Pancreas (tissue), 10 donors: ENCODE measurements at regions of chr12 and their contacts with region 1.

Region 1: DNA sequence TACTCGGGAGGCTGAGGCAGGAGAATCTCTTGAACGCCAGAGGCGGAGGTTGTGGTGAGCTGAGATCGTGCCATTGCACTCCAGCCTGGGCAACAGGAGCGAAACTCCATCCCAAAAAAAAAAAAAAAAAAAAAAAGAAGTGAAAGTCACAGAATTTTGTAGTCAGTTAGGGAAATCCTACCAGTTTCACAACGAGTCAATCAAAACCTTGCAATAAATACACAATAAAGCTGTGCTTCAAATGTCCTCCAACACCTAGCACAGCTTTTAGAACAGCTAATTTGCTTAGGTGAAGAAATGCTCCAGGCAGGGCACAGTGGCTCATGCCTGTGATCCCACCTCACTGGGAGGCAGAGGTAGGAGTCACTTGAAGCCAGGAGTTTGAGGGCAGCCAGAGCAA is 112.8 kb upstream of the ATF7IP start:
- DNase-seq: no peak
- ATAC-seq: no peak
- H3K4me3 ChIP-seq: no peak overlapping the region
- H3K27ac ChIP-seq: no peak overlapping the region
- H3K4me1 ChIP-seq: peaks cover 0 to 8% (median 8%) of the 10 kb centered on the region in 3 donors
- H3K27me3 ChIP-seq: no peaks in the 10 kb centered on the region
- CTCF ChIP-seq: no peak

Region 2: DNA sequence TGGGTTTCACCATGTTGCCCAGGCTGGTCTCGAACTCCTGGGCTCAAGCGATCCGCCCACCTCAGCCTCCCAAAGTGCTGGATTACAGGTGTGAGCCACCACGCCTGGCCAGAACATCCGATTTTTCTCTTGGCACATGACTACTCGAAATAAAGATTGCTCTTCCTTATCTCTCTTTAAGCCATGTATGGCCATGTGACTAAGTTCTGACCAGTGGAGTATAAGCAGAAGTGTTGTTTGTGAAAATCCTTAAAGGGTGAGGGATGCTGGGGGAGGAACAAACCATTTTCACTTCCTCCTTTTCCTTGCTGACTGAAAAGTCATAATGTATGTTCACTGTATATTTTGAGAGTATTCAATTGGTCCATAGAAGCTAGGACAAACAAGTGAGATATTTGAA is 62.1 kb after region 1 on chr12:
- intact Hi-C with region 1: no loop called
- DNase-seq: peak in 1 of 6 donors; percentile 15
- ATAC-seq: peak in 1 of 4 donors; percentile 42
- H3K4me3 ChIP-seq: no peak overlapping the region
- H3K27ac ChIP-seq: no peak overlapping the region
- H3K4me1 ChIP-seq: no peaks in the 10 kb centered on the region
- H3K27me3 ChIP-seq: no peaks in the 10 kb centered on the region
- CTCF ChIP-seq: no peak

Region 3: GRCh38 chr12:14340371-14340770 is 87.7 kb after region 1 on chr12:
- intact Hi-C with region 1: no loop called
- DNase-seq: no peak
- ATAC-seq: no peak
- H3K4me3 ChIP-seq: no peak overlapping the region
- H3K27ac ChIP-seq: no peak overlapping the region
- H3K4me1 ChIP-seq: no peaks in the 10 kb centered on the region
- H3K27me3 ChIP-seq: no peaks in the 10 kb centered on the region
- CTCF ChIP-seq: no peak

Region 4: DNA sequence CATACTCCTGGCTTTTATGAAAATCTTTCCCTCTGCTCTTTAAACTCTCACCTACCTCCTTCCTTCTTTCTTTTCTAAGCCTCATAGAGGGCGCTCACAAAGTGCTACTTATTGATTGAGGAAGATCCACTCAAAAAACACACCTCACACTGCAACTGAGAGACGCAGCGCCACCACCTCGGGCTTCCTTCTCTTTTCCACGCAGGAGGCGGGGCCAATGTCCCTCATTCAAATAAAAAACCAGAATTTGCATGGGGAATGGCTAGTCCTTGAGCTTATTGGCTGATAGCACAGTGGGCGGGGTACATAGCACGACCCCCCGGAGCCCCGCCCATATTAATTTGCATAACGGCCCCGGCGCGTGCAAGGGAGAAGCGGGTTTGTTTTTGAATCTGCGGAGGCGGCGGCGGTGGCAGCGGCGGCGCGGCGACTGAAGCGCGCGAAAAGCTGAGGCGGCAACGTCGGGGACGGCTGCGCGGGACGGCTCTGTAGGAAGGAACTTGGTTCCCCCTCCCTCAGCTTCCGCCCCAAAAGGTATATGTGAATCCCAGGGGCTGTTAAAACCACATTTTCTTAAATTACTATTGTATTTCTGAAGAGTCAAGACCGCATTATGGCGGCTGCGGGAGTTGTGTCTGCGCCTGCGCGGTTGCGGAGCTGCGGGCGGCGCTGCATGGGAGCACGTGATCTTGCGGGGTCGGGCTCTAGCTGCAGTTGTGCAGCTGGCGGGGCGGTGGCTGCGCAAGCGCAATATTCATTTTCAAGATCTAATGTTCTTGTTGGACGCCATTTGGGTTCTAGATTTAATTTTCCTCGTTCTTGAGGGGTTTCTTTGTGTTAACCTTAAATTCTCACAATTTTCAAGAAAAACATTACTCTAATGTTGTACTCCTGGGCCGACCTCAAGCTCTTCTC is 112.9 kb after region 1 on chr12 and contains the start of gene ATF7IP:
- intact Hi-C with region 1: loop called in 1 of 3 experiments (anchors 5 kb)
- DNase-seq: peak; percentile 94 to 97 (median 94)
- ATAC-seq: peak; percentile 94 to 97 (median 95)
- H3K4me3 ChIP-seq: peak within 1 kb of the TSS; percentile 27 to 66 (median 60)
- H3K27ac ChIP-seq: peak within 1 kb of the TSS; percentile 84 to 99 (median 98)
- H3K4me1 ChIP-seq: peaks cover 0 to 14% (median 6%) of the 10 kb centered on the region in 3 donors
- H3K27me3 ChIP-seq: no peaks in the 10 kb centered on the region
- CTCF ChIP-seq: no peak
- total RNA-seq, gene ATF7IP: 24.0 to 54.1 (median 30.3) TPM